HEK293 (cell line): ENCODE measurements at regions of chr4 and their contacts with region 1.

Region 1: DNA sequence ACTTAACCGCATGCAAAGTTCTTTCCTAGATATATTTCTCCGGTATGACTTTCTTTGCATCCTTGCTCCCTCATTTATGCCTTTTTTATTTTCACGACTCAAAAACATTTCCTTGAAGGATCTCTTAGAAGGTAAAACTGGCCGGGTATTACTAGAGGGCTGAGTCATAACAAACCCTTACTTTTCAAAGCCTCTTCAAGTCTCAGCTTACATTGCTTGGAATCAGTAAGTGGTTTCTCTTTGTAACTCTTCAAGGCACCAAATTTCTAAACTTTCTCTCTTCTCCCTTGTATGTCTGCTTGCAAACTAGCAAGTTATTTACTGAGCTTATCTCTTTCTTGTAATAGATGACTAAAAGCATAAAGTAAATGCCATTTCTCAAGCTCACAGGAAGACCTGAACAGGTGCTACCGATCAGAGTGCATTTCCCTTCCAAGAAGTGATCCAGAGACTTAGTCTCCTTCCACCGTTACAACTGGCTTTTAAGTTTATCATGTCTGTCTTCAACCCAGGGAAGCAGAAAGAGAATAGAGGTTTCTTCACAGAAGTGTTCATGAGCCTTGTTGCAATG is 75.5 kb downstream of the ANXA10 start:
- H3K4me3 ChIP-seq: no peak overlapping the region
- H3K27ac ChIP-seq: no peak overlapping the region
- H3K4me1 ChIP-seq: no peaks in the 10 kb centered on the region
- CTCF ChIP-seq: no peak

Region 2: GRCh38 chr4:168153596-168154440 is 14.0 kb before region 1 on chr4:
- CTCF ChIA-PET with region 1: interaction called, 12 read pairs
- POLR2A ChIA-PET with region 1: no interaction called
- H3K4me3 ChIP-seq: no peak overlapping the region
- H3K27ac ChIP-seq: no peak overlapping the region
- H3K4me1 ChIP-seq: no peaks in the 10 kb centered on the region
- CTCF ChIP-seq: no peak; the same call in 1 of the 2 replicates